Activated CD4-positive, alpha-beta T cell treated with anti-CD3 and anti-CD28 coated beads, Interleukin-2, amount 10 ng/mL, durations not matched to agents 24 days and 14 days (primary cell): ENCODE measurements at regions of chr1 and their contacts with region 1.

Region 1: DNA sequence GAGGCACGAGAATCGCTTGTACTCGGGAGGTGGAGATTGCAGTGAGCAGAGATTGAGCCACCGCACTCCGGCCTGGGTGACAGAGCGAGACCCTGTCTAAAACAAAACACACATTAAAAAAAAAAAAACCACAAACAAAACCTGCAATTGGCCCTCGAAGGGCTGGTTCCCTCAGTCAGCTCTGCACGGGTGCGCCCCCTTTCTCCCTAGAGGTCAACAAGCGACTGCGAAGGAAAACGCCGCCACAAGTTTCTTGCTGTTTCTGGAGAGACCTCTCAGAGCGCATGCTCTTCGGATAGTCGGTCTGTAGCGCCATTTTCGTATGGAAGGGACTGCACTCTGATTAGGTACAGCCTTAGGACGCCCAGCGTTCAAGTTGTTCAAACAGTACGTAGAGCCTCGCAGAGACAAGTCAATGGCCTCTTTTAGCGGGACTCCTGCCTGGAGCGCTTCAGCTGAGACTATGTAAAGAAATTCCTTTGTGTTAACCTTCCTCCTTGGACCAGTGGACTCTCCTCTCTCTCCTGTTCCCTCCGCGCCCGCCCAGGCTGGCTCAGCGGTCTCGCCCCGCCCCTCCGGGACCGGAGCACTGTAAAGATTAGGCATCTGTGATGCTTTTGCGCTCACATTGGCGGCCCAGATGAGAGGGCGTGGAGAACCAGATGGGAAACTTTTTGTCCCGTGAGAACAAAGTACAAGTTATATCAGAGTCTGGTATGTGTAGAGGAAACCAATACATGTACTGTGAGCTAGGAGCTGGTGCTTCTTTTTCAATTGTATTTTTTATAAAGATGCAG is 1.0 kb upstream of the CDC14A start:
- DNase-seq: peak; percentile 96
- H3K4me3 Mint-ChIP-seq: peak overlapping the region; percentile 96
- H3K27ac Mint-ChIP-seq: peak overlapping the region; percentile 98
- H3K4me1 Mint-ChIP-seq: peaks cover 42% of the 10 kb centered on the region
- H3K27me3 Mint-ChIP-seq: no peaks in the 10 kb centered on the region

Region 2: GRCh38 chr1:100132566-100133477 is 218.5 kb before region 1 on chr1 and contains the starts of genes SASS6 and TRMT13:
- intact Hi-C with region 1: loop called (anchors 1 kb)
- DNase-seq: peak; percentile 98
- H3K4me3 Mint-ChIP-seq: peak within 1 kb of the TSS; percentile 100
- H3K27ac Mint-ChIP-seq: peak within 1 kb of the TSS; percentile 97
- H3K4me1 Mint-ChIP-seq: peaks cover 38% of the 10 kb centered on the region
- H3K27me3 Mint-ChIP-seq: peaks cover 3% of the 10 kb centered on the region
- total RNA-seq, gene SASS6: 16.0 and 17.2 TPM in 2 replicates
- total RNA-seq, gene TRMT13: 24.3 and 25.5 TPM in 2 replicates

Region 3: DNA sequence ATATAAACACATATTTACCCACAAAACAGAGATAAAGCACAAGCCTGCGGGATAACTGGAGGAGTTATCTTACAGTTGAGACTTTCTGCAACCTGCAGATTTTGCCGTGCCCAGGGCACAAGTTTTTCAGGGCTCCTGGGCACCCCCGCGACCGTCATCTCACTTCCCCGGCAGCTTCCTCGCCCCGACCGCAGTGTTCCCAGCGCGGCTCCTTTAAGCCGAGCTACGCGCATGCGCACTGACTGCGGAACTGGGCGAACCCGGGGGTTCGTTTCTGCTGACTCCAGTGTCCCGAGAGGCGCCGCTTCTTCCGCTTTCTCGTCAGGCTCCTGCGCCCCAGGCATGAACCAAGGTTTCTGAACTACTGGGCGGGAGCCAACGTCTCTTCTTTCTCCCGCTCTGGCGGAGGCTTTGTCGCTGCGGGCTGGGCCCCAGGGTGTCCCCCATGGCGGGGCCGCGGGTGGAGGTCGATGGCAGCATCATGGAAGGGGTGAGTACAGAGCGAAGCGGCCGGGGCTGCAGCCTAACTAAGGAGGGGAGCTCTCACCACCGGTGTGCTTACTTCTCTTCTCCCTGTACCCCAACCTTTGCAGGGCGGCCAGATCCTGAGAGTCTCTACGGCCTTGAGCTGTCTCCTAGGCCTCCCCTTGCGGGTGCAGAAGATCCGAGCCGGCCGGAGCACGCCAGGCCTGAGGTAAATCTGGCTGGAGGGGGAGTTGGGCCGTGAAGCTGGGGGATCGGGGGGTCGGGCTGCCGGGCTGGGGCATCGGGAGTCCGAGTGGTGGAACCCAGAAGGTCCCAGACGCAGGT is 85.2 kb before region 1 on chr1 and contains the start of gene RTCA:
- intact Hi-C with region 1: loop called (anchors 1 kb)
- DNase-seq: peak; percentile 99
- H3K4me3 Mint-ChIP-seq: peak within 1 kb of the TSS; percentile 98
- H3K27ac Mint-ChIP-seq: peak within 1 kb of the TSS; percentile 96
- H3K4me1 Mint-ChIP-seq: peaks cover 34% of the 10 kb centered on the region
- H3K27me3 Mint-ChIP-seq: no peaks in the 10 kb centered on the region
- total RNA-seq, gene RTCA: 48.5 and 49.1 TPM in 2 replicates

Region 4: GRCh38 chr1:100400404-100400803 is 49.1 kb after region 1 on chr1:
- intact Hi-C with region 1: loop called (anchors 1 kb)
- DNase-seq: peak; percentile 90
- H3K4me3 Mint-ChIP-seq: peak overlapping the region; percentile 73
- H3K27ac Mint-ChIP-seq: peak overlapping the region; percentile 92
- H3K4me1 Mint-ChIP-seq: peaks cover 69% of the 10 kb centered on the region
- H3K27me3 Mint-ChIP-seq: no peaks in the 10 kb centered on the region

Region 5: DNA sequence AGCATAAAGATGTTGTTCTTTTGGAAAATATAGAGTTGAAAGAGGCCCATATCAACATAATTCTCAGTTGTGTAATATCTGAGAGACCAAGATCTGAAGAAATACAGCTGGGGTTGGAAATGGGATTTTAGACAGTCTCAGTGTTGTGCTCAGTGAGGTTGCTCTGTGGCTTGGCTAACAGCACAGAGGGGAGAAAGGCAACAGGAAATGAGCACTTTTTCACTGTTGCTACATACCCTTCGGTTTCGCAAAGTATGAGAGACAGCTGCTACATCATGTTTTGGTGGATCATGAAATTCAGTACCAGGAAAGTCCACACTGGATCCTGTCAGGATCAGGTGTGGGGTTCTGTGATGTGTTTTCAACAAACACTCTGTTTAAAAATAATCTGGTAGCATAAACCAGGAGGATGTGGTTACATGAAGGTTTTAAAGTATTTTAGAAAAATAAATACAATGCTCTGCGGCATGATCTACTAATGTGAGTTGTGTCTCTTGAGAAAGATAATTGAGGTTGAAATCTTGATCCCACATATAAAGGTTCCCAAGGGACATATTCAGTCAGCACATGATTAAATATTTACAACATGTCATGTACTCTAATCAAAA is 179.7 kb after region 1 on chr1:
- intact Hi-C with region 1: loop called (anchors 10 kb)
- DNase-seq: peak; percentile 77
- H3K4me3 Mint-ChIP-seq: no peak overlapping the region
- H3K27ac Mint-ChIP-seq: peak overlapping the region; percentile 10
- H3K4me1 Mint-ChIP-seq: peaks cover 23% of the 10 kb centered on the region
- H3K27me3 Mint-ChIP-seq: peaks cover 21% of the 10 kb centered on the region